ENCODE measurements at regions of chr17 and their contacts with region 1.

Region 1: DNA sequence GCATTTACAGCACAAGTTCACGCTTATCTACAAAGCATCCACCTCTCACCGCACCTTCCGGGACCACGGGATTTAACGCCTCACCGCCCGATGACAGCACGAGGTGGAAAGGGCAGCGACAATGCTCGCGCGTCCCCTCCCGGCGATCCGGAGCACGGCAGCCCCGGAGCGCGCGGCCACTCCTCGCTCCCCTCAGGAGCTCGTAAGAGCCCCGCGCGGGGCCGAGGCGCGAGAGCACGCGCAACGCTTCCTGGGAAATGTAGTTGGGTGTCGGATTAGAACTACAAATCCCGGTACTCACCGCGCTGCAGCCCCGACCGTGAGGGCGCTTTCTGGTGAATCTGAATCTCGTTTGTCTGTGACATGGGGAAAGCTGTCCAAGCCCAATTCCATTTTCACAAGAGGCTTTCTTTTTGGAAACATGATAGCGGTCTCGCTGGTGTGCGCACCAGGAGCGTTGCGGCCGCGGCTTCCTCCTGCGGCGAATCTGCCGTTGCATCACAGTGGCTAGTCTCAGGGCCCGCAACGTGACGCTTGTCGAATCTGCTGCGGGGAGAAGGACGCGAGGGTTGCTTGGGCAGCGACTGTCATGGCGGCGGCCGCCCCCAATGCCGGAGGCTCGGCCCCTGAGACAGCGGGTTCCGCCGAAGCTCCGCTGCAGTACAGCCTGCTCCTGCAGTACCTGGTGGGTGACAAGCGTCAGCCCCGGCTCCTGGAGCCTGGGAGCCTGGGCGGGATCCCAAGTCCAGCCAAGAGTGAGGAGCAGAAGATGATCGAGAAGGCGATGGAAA is at the start of gene TIMM22:
- DNase-seq: peak; percentile 86 to 98 (median 90)
- ATAC-seq: peak; percentile 92
- H3K4me3 ChIP-seq: peak within 1 kb of the TSS; percentile 100
- H3K4me3 Mint-ChIP-seq: peak within 1 kb of the TSS; percentile 100
- H3K27ac ChIP-seq: peak within 1 kb of the TSS; percentile 73 to 86
- H3K27ac Mint-ChIP-seq: peak within 1 kb of the TSS; percentile 93
- H3K4me1 ChIP-seq: peaks cover 24% of the 10 kb centered on the region
- H3K4me1 Mint-ChIP-seq: peaks cover 27% of the 10 kb centered on the region
- H3K27me3 ChIP-seq: no peaks in the 10 kb centered on the region
- H3K27me3 Mint-ChIP-seq: no peaks in the 10 kb centered on the region
- CTCF ChIP-seq: peak; percentile 93
- total RNA-seq, gene TIMM22: 10.2 to 10.9 TPM

Region 2: DNA sequence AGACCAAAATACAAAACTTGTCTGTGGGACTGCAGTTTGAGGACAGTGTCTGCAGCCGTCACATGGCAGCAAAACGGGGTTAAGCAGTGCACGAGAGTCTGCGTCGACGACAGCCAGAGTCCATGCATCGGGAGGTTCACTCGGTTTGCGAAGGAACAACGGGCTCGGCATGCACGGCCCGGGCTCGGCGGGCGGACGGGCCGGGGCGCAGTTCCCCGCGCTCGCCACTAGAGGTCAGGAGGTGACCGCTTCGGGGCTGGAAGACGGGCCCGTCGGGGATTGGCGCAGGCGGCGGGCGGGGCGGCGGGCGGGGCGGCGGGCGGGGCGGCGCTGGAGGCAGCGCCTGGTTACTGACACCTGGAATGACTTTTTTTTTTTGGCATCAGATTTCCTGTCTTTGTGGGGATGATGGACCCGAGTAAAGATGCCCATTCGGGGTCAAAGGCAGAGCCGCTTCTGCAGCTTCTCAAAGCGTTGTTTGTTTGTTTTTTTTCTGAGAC is 852.9 kb before region 1 on chr17:
- CTCF ChIA-PET with region 1: no interaction called
- POLR2A ChIA-PET with region 1: no interaction called
- intact Hi-C with region 1: loop called (anchors 2 kb)
- DNase-seq: peak; percentile 69 to 92 (median 84)
- ATAC-seq: peak; percentile 97
- H3K4me3 ChIP-seq: no peak overlapping the region
- H3K4me3 Mint-ChIP-seq: no peak overlapping the region
- H3K27ac ChIP-seq: no peak overlapping the region
- H3K27ac Mint-ChIP-seq: no peak overlapping the region
- H3K4me1 ChIP-seq: peaks cover 5% of the 10 kb centered on the region
- H3K4me1 Mint-ChIP-seq: no peaks in the 10 kb centered on the region
- H3K27me3 ChIP-seq: no peaks in the 10 kb centered on the region
- H3K27me3 Mint-ChIP-seq: no peaks in the 10 kb centered on the region
- CTCF ChIP-seq: peak; percentile 86

Region 3: DNA sequence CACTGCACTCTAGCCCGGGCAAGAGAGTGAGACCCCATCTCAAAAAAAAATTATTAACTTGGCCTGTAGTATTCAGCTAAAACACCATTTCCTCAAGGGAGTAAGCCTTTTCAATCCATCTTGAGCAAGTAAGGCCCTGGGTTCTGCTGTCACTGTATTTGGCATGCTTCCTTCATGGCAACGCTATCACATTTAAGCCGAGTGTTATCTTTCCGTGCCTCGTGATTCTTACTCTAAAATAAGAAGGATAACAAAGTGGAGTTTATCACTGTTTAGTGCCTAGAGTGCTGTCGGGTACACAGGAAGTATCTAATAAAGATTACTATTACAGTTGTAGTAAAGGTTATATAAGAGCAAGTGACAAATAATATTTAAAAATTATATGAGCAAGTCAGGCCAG is 290.9 kb before region 1 on chr17:
- CTCF ChIA-PET with region 1: no interaction called
- POLR2A ChIA-PET with region 1: no interaction called
- intact Hi-C with region 1: loop called in 1 of 2 experiments (anchors 5 kb)
- DNase-seq: no peak
- ATAC-seq: no peak
- H3K4me3 ChIP-seq: no peak overlapping the region
- H3K4me3 Mint-ChIP-seq: no peak overlapping the region
- H3K27ac ChIP-seq: no peak overlapping the region
- H3K27ac Mint-ChIP-seq: no peak overlapping the region
- H3K4me1 ChIP-seq: peaks cover 2% of the 10 kb centered on the region
- H3K4me1 Mint-ChIP-seq: peaks cover 21% of the 10 kb centered on the region
- H3K27me3 ChIP-seq: no peaks in the 10 kb centered on the region
- H3K27me3 Mint-ChIP-seq: no peaks in the 10 kb centered on the region
- CTCF ChIP-seq: no peak

Region 4: GRCh38 chr17:752002-752619 is 244.6 kb before region 1 on chr17 and contains the start of gene GEMIN4:
- CTCF ChIA-PET with region 1: interaction called, 7 read pairs
- POLR2A ChIA-PET with region 1: interaction called, 11 read pairs
- intact Hi-C with region 1: no loop called
- DNase-seq: peak; percentile 91 to 99 (median 98)
- ATAC-seq: peak; percentile 82
- H3K4me3 ChIP-seq: peak within 1 kb of the TSS; percentile 59
- H3K4me3 Mint-ChIP-seq: peak within 1 kb of the TSS; percentile 98
- H3K27ac ChIP-seq: peak within 1 kb of the TSS in 1 of 2 donors; percentile 65
- H3K27ac Mint-ChIP-seq: peak within 1 kb of the TSS; percentile 83
- H3K4me1 ChIP-seq: peaks cover 29% of the 10 kb centered on the region
- H3K4me1 Mint-ChIP-seq: peaks cover 44% of the 10 kb centered on the region
- H3K27me3 ChIP-seq: no peaks in the 10 kb centered on the region
- H3K27me3 Mint-ChIP-seq: no peaks in the 10 kb centered on the region
- CTCF ChIP-seq: peak; percentile 99
- total RNA-seq, gene GEMIN4: 16.0 to 18.0 TPM

Region 5: DNA sequence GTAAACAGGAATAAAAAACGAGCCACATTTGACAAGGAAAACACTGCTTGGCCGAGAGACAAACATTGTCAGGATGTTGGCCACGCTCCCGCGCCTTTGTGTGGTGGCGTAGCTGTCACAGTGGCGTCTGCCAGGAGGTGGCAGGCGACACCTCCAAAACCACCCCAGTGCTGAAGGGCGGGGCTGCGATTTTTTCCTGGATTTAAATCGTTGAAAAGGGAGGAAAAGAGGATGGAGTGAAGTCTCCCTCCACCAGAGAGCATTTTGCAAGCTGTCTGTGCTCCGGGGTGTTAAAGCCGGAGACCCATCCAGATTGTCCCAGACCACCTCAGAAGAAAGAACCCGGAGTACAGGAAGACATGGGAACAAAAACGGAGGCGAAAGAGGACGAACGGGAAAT is 201.9 kb before region 1 on chr17:
- CTCF ChIA-PET with region 1: interaction called, 19 read pairs
- POLR2A ChIA-PET with region 1: interaction called, 5 read pairs
- intact Hi-C with region 1: no loop called
- DNase-seq: peak; percentile 14 to 68 (median 26)
- ATAC-seq: peak; percentile 77
- H3K4me3 ChIP-seq: no peak overlapping the region
- H3K4me3 Mint-ChIP-seq: peak overlapping the region; percentile 31
- H3K27ac ChIP-seq: no peak overlapping the region
- H3K27ac Mint-ChIP-seq: no peak overlapping the region
- H3K4me1 ChIP-seq: peaks cover 8% of the 10 kb centered on the region
- H3K4me1 Mint-ChIP-seq: peaks cover 6% of the 10 kb centered on the region
- H3K27me3 ChIP-seq: no peaks in the 10 kb centered on the region
- H3K27me3 Mint-ChIP-seq: no peaks in the 10 kb centered on the region
- CTCF ChIP-seq: peak; percentile 49

Region 6: GRCh38 chr17:846901-847843 is 149.6 kb before region 1 on chr17:
- CTCF ChIA-PET with region 1: no interaction called
- POLR2A ChIA-PET with region 1: no interaction called
- intact Hi-C with region 1: no loop called
- DNase-seq: peak in 1 of 14 experiments; percentile 6
- ATAC-seq: no peak
- H3K4me3 ChIP-seq: no peak overlapping the region
- H3K4me3 Mint-ChIP-seq: no peak overlapping the region
- H3K27ac ChIP-seq: no peak overlapping the region
- H3K27ac Mint-ChIP-seq: no peak overlapping the region
- H3K4me1 ChIP-seq: peaks cover 8% of the 10 kb centered on the region
- H3K4me1 Mint-ChIP-seq: peaks cover 15% of the 10 kb centered on the region
- H3K27me3 ChIP-seq: peaks cover 16 to 35% of the 10 kb centered on the region in 2 experiments
- H3K27me3 Mint-ChIP-seq: peaks cover 57% of the 10 kb centered on the region
- CTCF ChIP-seq: no peak

Region 7: GRCh38 chr17:1186923-1187771 is 190.4 kb after region 1 on chr17:
- CTCF ChIA-PET with region 1: no interaction called
- POLR2A ChIA-PET with region 1: no interaction called
- intact Hi-C with region 1: no loop called
- DNase-seq: peak; percentile 57 to 88 (median 71)
- ATAC-seq: peak; percentile 97
- H3K4me3 ChIP-seq: no peak overlapping the region
- H3K4me3 Mint-ChIP-seq: no peak overlapping the region
- H3K27ac ChIP-seq: no peak overlapping the region
- H3K27ac Mint-ChIP-seq: no peak overlapping the region
- H3K4me1 ChIP-seq: peaks cover 18% of the 10 kb centered on the region
- H3K4me1 Mint-ChIP-seq: peaks cover 4% of the 10 kb centered on the region
- H3K27me3 ChIP-seq: no peaks in the 10 kb centered on the region
- H3K27me3 Mint-ChIP-seq: peaks cover 10% of the 10 kb centered on the region
- CTCF ChIP-seq: peak; percentile 96

Measured in CD4-positive, alpha-beta T cell (primary cell).